Mammary epithelial cell (primary cell): ENCODE measurements at regions of chr11 and their contacts with region 1.

Region 1: DNA sequence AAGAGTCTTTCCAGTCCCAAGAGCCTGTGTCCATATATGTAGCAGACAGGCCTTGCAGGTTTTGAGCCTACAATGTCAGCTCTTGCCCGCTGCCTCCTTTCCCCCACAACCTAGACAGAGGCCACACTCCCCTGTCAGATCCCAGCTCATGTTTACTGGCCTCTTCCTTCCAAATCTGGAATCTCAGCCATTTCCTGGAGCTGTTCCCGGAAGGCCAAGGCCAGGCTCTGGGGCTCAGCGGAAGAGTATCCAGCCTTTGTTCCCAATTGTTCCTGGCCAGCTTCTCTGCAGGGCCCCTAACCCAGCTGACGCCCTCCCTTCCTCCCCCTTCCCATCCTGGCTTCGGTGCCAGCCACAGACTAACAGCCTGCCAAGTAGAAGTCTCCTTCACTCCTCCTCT is 1.0 kb upstream of the ROBO4 start:
- DNase-seq: no peak
- H3K4me3 ChIP-seq: no peak overlapping the region
- H3K27ac ChIP-seq: peak overlapping the region; percentile 91
- H3K4me1 ChIP-seq: peaks cover 66% of the 10 kb centered on the region
- H3K27me3 ChIP-seq: no peaks in the 10 kb centered on the region
- CTCF ChIP-seq: no peak

Region 2: GRCh38 chr11:124070915-124071635 is 827.6 kb before region 1 on chr11:
- CTCF ChIA-PET with region 1: no interaction called
- dilution Hi-C with region 1: no loop called
- in situ Hi-C with region 1: no loop called
- intact Hi-C with region 1: no loop called
- DNase-seq: peak; percentile 50
- H3K4me3 ChIP-seq: no peak overlapping the region
- H3K27ac ChIP-seq: no peak overlapping the region
- H3K4me1 ChIP-seq: peaks cover 11% of the 10 kb centered on the region
- H3K27me3 ChIP-seq: no peaks in the 10 kb centered on the region
- CTCF ChIP-seq: peak; percentile 68 to 71

Region 3: GRCh38 chr11:124194698-124195410 is 703.9 kb before region 1 on chr11:
- CTCF ChIA-PET with region 1: no interaction called
- dilution Hi-C with region 1: no loop called
- in situ Hi-C with region 1: no loop called
- intact Hi-C with region 1: no loop called
- DNase-seq: peak; percentile 48
- H3K4me3 ChIP-seq: no peak overlapping the region
- H3K27ac ChIP-seq: no peak overlapping the region
- H3K4me1 ChIP-seq: no peaks in the 10 kb centered on the region
- H3K27me3 ChIP-seq: peaks cover 5% of the 10 kb centered on the region
- CTCF ChIP-seq: peak; percentile 89 to 94

Region 4: DNA sequence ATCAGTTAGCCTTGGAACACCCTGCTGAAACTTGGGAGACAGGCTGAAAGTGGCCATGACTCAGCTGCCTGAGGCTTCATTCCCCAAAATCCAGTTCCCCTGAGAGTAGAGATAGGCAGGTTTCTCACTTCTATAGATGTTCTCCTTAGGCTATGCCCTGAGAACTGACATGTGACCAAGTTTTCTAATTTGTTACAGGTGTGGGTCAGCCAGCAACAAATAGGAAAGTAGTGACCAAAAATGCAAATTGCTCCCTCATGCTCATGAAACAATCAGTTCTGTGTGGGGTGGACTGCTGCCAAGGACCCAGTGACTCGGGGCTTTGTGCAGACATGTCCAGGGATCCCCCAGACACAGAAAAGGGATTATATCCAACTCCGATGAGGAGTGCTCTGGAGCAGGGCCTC is 48.0 kb after region 1 on chr11:
- CTCF ChIA-PET with region 1: no interaction called
- dilution Hi-C with region 1: no loop called
- in situ Hi-C with region 1: loop called (anchors 5 to 10 kb)
- intact Hi-C with region 1: no loop called
- DNase-seq: peak; percentile 86
- H3K4me3 ChIP-seq: no peak overlapping the region
- H3K27ac ChIP-seq: peak overlapping the region; percentile 80
- H3K4me1 ChIP-seq: peaks cover 18% of the 10 kb centered on the region
- H3K27me3 ChIP-seq: no peaks in the 10 kb centered on the region
- CTCF ChIP-seq: no peak

Region 5: DNA sequence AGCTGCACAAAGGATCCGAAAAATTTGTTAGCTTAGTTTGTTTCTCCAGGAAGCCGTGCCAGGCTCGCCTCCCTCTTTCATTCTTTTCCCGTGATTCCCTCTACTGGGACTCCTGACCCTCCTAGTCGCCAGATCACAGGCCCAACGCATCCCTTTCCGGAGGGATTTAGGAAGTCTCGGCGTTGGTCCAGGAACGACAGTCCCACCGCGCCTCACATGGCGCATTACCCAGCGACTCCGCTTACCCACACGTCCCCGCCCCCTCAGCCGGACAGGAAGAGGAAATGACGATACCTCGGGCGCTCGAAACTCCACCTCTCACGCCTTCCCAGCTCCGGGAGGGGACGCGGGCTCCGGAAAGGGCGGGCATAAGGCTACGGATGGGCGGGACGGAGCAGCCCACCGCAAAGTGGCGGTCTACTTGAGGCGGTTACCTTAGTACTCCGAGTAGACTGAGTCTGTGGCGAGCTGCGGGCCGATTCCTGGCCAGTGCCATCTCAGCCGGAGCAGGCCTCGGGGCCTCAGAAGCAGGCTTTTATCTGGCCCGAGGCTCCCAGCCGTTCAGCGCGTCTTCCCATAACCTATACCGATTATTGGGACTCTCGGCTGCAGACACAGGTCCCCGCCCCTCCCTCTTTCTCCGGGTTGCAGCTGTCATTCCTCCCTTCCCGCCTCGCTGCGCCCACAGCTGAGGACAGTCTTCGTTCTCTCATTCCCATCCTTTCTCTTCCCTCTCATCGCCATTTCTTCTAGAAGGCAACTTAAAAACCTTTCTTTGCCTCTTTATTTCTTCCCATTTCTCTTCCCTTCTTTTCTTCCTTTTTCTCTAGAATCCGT is 55.3 kb after region 1 on chr11 and contains the start of gene CCDC15:
- CTCF ChIA-PET with region 1: interaction called, 3 read pairs
- dilution Hi-C with region 1: no loop called
- in situ Hi-C with region 1: loop called (anchors 5 to 10 kb)
- intact Hi-C with region 1: loop called (anchors 2 kb)
- DNase-seq: peak; percentile 97
- H3K4me3 ChIP-seq: peak within 1 kb of the TSS; percentile 63 to 65 (median 64)
- H3K27ac ChIP-seq: peak within 1 kb of the TSS; percentile 77
- H3K4me1 ChIP-seq: peaks cover 9% of the 10 kb centered on the region
- H3K27me3 ChIP-seq: no peaks in the 10 kb centered on the region
- CTCF ChIP-seq: no peak
- total RNA-seq, gene CCDC15: 2.3 to 5.4 TPM